Naive thymus-derived CD8-positive, alpha-beta T cell (primary cell): ENCODE measurements at regions of chrX and their contacts with region 1.

Region 1: GRCh38 chrX:18984381-18985185 is 669 bp upstream of the PHKA2 start:
- DNase-seq: peak; percentile 78 to 91 (median 85)
- ATAC-seq: peak; percentile 82 to 88
- H3K4me3 Mint-ChIP-seq: peak overlapping the region; percentile 82 to 91 (median 87)
- H3K27ac Mint-ChIP-seq: peak overlapping the region; percentile 75 to 97 (median 96)
- H3K4me1 Mint-ChIP-seq: peaks cover 4 to 32% (median 23%) of the 10 kb centered on the region in 4 donors
- H3K27me3 Mint-ChIP-seq: no peaks in the 10 kb centered on the region

Region 2: GRCh38 chrX:18886344-18887161 is 98.0 kb before region 1 on chrX:
- POLR2A ChIA-PET with region 1: interaction called, 10 read pairs
- DNase-seq: peak in 9 of 10 donors; percentile 4 to 50 (median 27)
- ATAC-seq: peak; percentile 59 to 66
- H3K4me3 Mint-ChIP-seq: peak overlapping the region; percentile 83 to 94 (median 90)
- H3K27ac Mint-ChIP-seq: peak overlapping the region; percentile 83 to 95 (median 93)
- H3K4me1 Mint-ChIP-seq: peaks cover 17 to 42% (median 40%) of the 10 kb centered on the region in 4 donors
- H3K27me3 Mint-ChIP-seq: no peaks in the 10 kb centered on the region